Common myeloid progenitor, CD34-positive (primary cell): ENCODE measurements at regions of chr5 and their contacts with region 1.

Region 1: DNA sequence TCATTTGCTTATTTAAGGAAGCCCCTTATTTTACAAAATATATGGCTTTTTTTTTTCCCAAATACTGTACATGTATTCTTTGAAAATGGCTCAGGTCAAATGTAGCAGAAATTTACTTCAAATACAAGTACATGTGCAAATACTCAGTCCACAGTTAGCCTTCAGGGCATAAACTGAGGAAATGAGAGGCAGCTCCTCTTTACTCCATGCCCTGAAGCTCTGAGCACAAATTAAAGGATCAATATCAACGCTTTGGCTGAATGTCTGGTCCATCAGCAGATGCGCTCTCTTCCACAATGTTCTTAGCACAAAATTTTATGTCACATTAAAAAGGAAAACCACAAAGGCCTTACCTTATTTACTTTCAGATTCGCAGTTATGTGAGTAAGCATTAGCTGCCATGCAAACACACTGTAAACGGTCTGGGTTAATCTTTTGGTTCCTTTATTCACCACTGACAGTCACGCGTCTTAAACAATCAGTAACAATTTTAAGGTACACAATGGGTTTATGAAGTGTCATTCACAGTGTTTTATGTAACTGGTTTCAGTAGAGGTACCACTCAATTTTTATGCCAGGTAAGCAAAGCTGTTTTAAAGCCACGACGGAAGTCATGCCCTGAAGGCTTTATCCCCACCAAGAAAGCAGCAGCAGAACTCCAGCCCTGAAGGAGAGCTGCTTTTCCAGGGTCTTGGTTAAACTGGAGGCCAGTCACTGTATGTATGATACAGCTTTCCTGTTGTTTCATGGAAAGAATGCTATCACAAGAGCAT is 103.4 kb downstream of the OTULIN start:
- DNase-seq: peak in 2 of 3 donors; percentile 33 to 53
- H3K4me3 ChIP-seq: no peak overlapping the region
- H3K27ac ChIP-seq: no peak overlapping the region
- H3K4me1 ChIP-seq: peaks cover 0 to 3% (median 1%) of the 10 kb centered on the region in 4 experiments
- H3K27me3 ChIP-seq: no peaks in the 10 kb centered on the region

Region 2: DNA sequence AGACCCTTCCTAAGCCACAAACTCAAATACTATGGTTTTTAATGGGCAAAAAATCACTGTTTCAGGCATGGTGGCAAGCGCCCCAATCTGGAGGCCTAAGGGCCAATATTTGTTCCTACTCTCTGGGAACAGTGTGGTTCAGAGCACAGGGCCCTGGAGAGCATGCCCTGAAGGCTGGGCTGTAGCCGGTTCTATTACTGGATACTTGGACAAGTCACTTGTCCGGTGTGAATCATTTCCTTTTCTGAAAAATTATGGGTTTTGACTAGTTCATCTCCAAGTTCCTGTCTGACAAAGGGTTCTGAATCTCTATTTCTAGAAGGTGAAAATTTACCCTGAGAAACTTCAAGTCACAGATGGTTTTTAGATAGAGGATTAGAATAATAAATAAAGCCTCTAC is 28.4 kb before region 1 on chr5:
- CTCF ChIA-PET with region 1: no interaction called
- POLR2A ChIA-PET with region 1: no interaction called
- DNase-seq: no peak
- H3K4me3 ChIP-seq: no peak overlapping the region
- H3K27ac ChIP-seq: no peak overlapping the region
- H3K4me1 ChIP-seq: no peaks in the 10 kb centered on the region
- H3K27me3 ChIP-seq: no peaks in the 10 kb centered on the region

Region 3: GRCh38 chr5:14834584-14835550 is 66.9 kb after region 1 on chr5:
- CTCF ChIA-PET with region 1: no interaction called
- POLR2A ChIA-PET with region 1: interaction called, 10 read pairs
- DNase-seq: no peak
- H3K4me3 ChIP-seq: no peak overlapping the region
- H3K27ac ChIP-seq: no peak overlapping the region
- H3K4me1 ChIP-seq: no peaks in the 10 kb centered on the region
- H3K27me3 ChIP-seq: no peaks in the 10 kb centered on the region

Region 4: DNA sequence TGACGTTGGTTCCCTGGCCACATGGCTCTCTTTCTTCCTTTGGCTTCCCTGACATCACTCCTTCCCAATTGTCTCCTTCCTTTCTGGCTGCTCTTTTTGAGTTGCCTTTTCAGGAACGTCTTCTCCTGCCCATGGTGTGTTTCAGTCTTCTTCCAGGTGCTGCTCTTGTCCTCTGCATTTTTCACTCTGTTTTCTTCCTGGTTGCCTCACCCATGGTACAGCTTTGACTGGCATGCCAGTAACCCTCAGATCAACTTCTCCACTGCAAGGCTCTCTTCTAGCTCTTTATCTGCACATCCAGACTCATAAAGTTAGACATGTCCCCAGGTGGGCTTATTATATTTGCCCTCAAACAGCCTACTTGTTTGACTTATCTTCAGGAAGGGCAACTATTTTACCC is 194.7 kb after region 1 on chr5:
- CTCF ChIA-PET with region 1: no interaction called
- POLR2A ChIA-PET with region 1: no interaction called
- DNase-seq: no peak
- H3K4me3 ChIP-seq: no peak overlapping the region
- H3K27ac ChIP-seq: no peak overlapping the region
- H3K4me1 ChIP-seq: no peaks in the 10 kb centered on the region
- H3K27me3 ChIP-seq: no peaks in the 10 kb centered on the region